ENCODE measurements at regions of chr20 and their contacts with region 1.

Region 1: DNA sequence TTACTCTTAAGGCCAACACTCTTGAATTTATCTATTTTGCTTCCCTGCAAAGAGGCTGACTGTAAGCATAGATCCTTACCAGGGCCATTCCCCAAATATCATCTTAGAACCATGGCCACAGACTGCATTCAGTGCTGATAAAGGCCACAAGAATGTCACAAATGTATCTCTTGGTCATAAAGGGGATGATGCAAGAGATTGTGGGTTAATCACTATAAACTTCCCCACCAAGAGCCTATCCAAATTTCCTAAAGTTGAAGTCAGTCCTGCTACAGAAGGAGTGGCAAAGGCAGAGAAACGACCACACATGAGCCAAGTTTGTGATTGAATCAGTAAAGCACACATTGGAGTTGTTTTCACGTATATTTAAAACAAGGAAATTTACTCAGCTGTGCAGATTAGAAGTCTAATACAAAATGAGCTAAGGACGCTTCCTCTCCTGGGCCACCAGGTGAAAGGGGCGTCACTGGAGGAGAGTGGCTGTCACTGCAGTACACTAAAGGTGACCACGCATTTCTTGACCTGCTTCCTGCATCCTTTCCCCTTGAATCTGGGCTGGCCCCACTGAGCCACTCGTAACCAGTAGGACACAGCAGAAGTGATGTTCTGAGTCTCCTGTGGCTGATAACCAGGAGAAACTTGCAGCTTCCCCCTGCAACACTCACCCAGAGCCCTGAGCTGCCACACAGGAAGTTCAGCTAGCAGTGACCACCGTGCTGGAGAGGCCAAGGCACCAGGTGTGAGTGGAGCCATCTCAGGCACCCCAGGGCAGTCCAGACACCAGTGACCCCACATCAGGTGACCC is 181.9 kb downstream of the SYNDIG1 start:
- DNase-seq: peak; percentile 77
- H3K4me3 ChIP-seq: no peak overlapping the region
- H3K27ac ChIP-seq: peak overlapping the region; percentile 86
- H3K27me3 ChIP-seq: peaks cover 2% of the 10 kb centered on the region
- CTCF ChIP-seq: no peak

Region 2: DNA sequence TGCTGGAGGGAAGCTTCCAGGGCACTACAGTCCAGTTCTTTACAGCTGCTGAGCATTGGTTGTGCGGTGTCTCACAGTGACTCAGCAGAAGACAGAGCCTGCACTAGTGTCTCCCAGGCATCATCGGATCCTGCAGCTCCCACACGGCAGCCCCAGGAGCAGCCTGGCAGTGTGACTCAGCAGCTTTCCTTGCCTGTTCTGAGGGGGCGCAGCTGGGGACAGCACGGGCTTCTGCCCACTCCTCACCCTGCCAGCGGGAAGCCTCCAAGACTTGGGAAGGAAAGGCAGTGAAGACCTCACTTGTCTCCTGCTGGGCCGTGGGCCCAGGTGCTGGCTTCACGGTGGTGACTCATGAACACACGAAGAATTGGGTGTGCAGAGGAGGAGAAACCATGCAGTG is 16.5 kb before region 1 on chr20:
- CTCF ChIA-PET with region 1: no interaction called
- POLR2A ChIA-PET with region 1: interaction called, 10 read pairs
- DNase-seq: peak; percentile 79
- H3K4me3 ChIP-seq: no peak overlapping the region
- H3K27ac ChIP-seq: peak overlapping the region; percentile 73
- H3K27me3 ChIP-seq: no peaks in the 10 kb centered on the region
- CTCF ChIP-seq: no peak

Region 3: GRCh38 chr20:24672886-24673677 is 21.7 kb after region 1 on chr20:
- CTCF ChIA-PET with region 1: no interaction called
- POLR2A ChIA-PET with region 1: interaction called, 11 read pairs
- DNase-seq: peak; percentile 90
- H3K4me3 ChIP-seq: no peak overlapping the region
- H3K27ac ChIP-seq: peak overlapping the region; percentile 98
- H3K27me3 ChIP-seq: no peaks in the 10 kb centered on the region
- CTCF ChIP-seq: no peak

Region 4: GRCh38 chr20:24942679-24943078 is 291.3 kb after region 1 on chr20:
- CTCF ChIA-PET with region 1: no interaction called
- POLR2A ChIA-PET with region 1: no interaction called
- DNase-seq: no peak
- H3K4me3 ChIP-seq: no peak overlapping the region
- H3K27ac ChIP-seq: no peak overlapping the region
- H3K27me3 ChIP-seq: peaks cover 3% of the 10 kb centered on the region
- CTCF ChIP-seq: no peak